Caco-2 (cell line): ENCODE measurements at regions of chr1 and their contacts with region 1.

Region 1: GRCh38 chr1:162878000-162878596 is 17.1 kb upstream of the CCDC190 start:
- DNase-seq: peak; percentile 72 to 74
- H3K4me3 ChIP-seq: no peak overlapping the region
- H3K4me3 Mint-ChIP-seq: no peak overlapping the region
- H3K27ac Mint-ChIP-seq: no peak overlapping the region
- H3K4me1 ChIP-seq: peaks cover 12% of the 10 kb centered on the region
- H3K4me1 Mint-ChIP-seq: no peaks in the 10 kb centered on the region
- H3K27me3 ChIP-seq: no peaks in the 10 kb centered on the region
- H3K27me3 Mint-ChIP-seq: no peaks in the 10 kb centered on the region
- CTCF ChIP-seq: peak; percentile 70 to 74

Region 2: GRCh38 chr1:162422662-162423375 is 455.3 kb before region 1 on chr1:
- CTCF ChIA-PET with region 1: no interaction called
- POLR2A ChIA-PET with region 1: no interaction called
- intact Hi-C with region 1: no loop called
- DNase-seq: no peak
- H3K4me3 ChIP-seq: no peak overlapping the region
- H3K4me3 Mint-ChIP-seq: no peak overlapping the region
- H3K27ac Mint-ChIP-seq: no peak overlapping the region
- H3K4me1 ChIP-seq: no peaks in the 10 kb centered on the region
- H3K4me1 Mint-ChIP-seq: no peaks in the 10 kb centered on the region
- H3K27me3 ChIP-seq: no peaks in the 10 kb centered on the region
- H3K27me3 Mint-ChIP-seq: peaks cover 3% of the 10 kb centered on the region
- CTCF ChIP-seq: no peak

Region 3: GRCh38 chr1:162854245-162854882 is 23.7 kb before region 1 on chr1:
- CTCF ChIA-PET with region 1: interaction called, 7 read pairs
- POLR2A ChIA-PET with region 1: no interaction called
- intact Hi-C with region 1: loop called (anchors 1 kb)
- DNase-seq: peak; percentile 64 to 68
- H3K4me3 ChIP-seq: no peak overlapping the region
- H3K4me3 Mint-ChIP-seq: no peak overlapping the region
- H3K27ac Mint-ChIP-seq: no peak overlapping the region
- H3K4me1 ChIP-seq: no peaks in the 10 kb centered on the region
- H3K4me1 Mint-ChIP-seq: no peaks in the 10 kb centered on the region
- H3K27me3 ChIP-seq: no peaks in the 10 kb centered on the region
- H3K27me3 Mint-ChIP-seq: peaks cover 3% of the 10 kb centered on the region
- CTCF ChIP-seq: peak; percentile 52 to 78

Region 4: DNA sequence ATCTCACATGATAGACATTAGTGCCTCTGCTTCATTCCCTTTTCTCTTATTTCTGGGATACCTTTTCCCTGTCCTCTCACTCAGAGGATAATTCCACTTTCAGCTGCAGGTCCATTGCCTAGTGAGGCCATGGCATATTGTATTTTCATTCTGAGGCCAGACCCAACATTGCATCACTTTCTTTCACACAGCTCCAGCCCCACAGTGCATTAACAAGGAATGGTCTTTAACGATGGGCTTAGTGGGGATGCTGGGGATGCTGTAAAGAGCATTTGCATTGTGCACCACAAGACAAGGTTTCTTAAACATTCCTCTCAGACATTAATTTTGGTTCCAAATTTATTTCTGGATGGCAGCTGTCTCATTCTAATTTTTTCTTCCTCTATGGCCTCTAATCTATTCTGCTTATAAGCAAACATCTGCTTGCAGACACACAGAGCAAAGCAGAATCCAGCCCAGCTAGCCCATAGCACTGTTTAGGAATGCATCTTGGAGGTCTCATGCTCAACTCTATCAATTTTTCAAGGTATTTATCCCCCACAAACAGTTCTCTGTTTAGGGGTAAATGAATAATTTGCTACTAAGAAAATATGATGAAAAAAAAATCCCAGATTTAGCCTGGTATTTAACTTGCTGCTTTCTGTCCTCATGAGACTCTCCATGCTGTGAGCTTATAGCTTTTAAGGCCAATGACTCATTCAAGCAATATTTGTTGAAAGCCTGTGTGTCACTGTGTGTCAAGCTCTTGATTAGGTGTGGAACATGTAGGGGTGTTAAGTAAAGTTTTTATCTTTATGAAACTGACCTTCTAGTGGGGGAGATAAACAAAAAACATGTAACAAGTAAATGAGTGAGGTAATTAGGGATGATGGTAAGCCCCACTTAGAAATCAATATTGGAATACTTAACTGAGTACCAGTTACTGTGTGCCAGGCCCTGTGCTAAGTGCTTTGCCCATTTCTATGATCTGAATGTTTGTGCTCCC is 27.4 kb after region 1 on chr1:
- CTCF ChIA-PET with region 1: interaction called, 3 read pairs
- POLR2A ChIA-PET with region 1: interaction called, 3 read pairs
- intact Hi-C with region 1: loop called (anchors 2 kb)
- DNase-seq: peak in 1 of 2 experiments; percentile 28
- H3K4me3 ChIP-seq: no peak overlapping the region
- H3K4me3 Mint-ChIP-seq: no peak overlapping the region
- H3K27ac Mint-ChIP-seq: peak overlapping the region; percentile 89
- H3K4me1 ChIP-seq: peaks cover 10% of the 10 kb centered on the region
- H3K4me1 Mint-ChIP-seq: peaks cover 30% of the 10 kb centered on the region
- H3K27me3 ChIP-seq: no peaks in the 10 kb centered on the region
- H3K27me3 Mint-ChIP-seq: no peaks in the 10 kb centered on the region
- CTCF ChIP-seq: no peak

Region 5: DNA sequence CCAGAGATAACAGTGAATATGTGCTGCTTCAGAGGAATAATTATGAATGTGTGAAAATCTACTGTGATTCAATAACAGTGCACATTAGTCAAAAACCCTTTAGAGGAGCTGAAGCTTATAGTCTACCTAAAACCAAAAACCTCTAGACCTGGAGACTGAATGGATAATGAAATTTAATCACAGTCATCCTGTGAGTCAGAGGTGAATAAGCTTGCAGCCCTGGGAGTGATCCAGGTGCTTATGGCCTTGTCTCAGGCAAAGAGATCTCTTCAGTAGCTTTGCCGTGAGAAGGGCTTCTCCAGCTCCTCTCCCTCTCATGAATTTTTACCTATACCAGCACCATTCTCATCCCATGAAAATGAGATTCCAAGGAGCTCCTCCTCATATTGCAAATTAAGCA is 109.8 kb after region 1 on chr1:
- CTCF ChIA-PET with region 1: no interaction called
- POLR2A ChIA-PET with region 1: no interaction called
- intact Hi-C with region 1: loop called (anchors 2 kb)
- DNase-seq: no peak
- H3K4me3 ChIP-seq: no peak overlapping the region
- H3K4me3 Mint-ChIP-seq: no peak overlapping the region
- H3K27ac Mint-ChIP-seq: no peak overlapping the region
- H3K4me1 ChIP-seq: no peaks in the 10 kb centered on the region
- H3K4me1 Mint-ChIP-seq: no peaks in the 10 kb centered on the region
- H3K27me3 ChIP-seq: no peaks in the 10 kb centered on the region
- H3K27me3 Mint-ChIP-seq: peaks cover 8% of the 10 kb centered on the region
- CTCF ChIP-seq: no peak

Region 6: GRCh38 chr1:163174524-163175437 is 296.7 kb after region 1 on chr1:
- CTCF ChIA-PET with region 1: no interaction called
- POLR2A ChIA-PET with region 1: no interaction called
- intact Hi-C with region 1: loop called (anchors 1 kb)
- DNase-seq: peak; percentile 34 to 55
- H3K4me3 ChIP-seq: no peak overlapping the region
- H3K4me3 Mint-ChIP-seq: no peak overlapping the region
- H3K27ac Mint-ChIP-seq: no peak overlapping the region
- H3K4me1 ChIP-seq: no peaks in the 10 kb centered on the region
- H3K4me1 Mint-ChIP-seq: no peaks in the 10 kb centered on the region
- H3K27me3 ChIP-seq: no peaks in the 10 kb centered on the region
- H3K27me3 Mint-ChIP-seq: peaks cover 3% of the 10 kb centered on the region
- CTCF ChIP-seq: peak; percentile 82 to 84